A549 (cell line): ENCODE measurements at regions of chr11 and their contacts with region 1.

Region 1: DNA sequence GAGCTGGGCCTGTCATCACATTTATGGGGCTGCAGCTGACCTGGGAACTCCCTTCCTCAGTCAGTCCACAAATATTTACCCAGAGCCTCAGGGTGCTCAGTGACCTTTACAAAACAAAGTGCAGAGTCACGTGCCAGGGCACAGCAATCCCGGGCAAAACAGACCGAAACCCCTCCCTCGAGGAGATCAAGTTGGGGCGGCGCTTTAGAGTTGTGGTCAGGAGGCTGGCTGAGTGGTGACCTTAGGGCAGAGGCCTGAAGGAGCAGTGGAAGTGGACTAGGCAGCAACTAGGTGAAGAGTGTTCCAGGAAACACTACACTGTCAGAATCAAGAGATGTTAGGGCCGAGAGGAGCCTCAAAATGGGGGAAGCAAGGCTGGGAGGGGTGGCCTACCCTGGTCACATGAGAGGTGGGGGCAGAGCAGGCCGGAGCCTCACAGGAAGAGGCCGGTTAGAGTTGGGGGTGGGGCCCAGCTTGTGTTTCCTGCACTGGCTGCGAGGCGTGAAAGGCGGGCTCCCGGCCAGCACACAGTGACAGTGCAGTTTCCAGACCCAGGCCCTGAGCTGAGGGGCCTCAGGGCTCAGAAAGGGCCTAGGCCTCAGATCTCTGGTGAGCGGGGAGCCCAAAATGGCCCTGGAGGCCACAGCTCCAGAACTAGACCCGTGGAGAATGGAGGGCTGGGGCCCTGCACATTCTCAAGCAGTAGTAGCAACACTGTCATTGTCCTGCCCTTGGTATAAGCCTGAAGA is 3.7 kb upstream of the NEAT1 start:
- DNase-seq: peak; percentile 94 to 98
- ATAC-seq: peak; percentile 12 to 52
- H3K4me3 ChIP-seq: peak overlapping the region; percentile 30
- H3K27ac ChIP-seq: peak overlapping the region; percentile 97 to 100
- H3K4me1 ChIP-seq: peaks cover 52% of the 10 kb centered on the region
- CTCF ChIP-seq: no peak
- EP300 ChIP-seq: peak; percentile 76 to 83; a peak in 4 of 5 replicates
- POLR2A ChIP-seq: no peak; the same call in 1 of the 2 replicates
- RAD21 ChIP-seq: no peak

Region 2: GRCh38 chr11:65132243-65132987 is 286.5 kb before region 1 on chr11:
- CTCF ChIA-PET with region 1: no interaction called
- POLR2A ChIA-PET with region 1: no interaction called
- DNase-seq: no peak
- ATAC-seq: no peak
- H3K4me3 ChIP-seq: no peak overlapping the region; the same call in 2 of the 3 replicates
- H3K27ac ChIP-seq: no peak overlapping the region
- H3K4me1 ChIP-seq: peaks cover 15% of the 10 kb centered on the region
- CTCF ChIP-seq: no peak
- EP300 ChIP-seq: no peak
- POLR2A ChIP-seq: no peak
- RAD21 ChIP-seq: no peak

Region 3: DNA sequence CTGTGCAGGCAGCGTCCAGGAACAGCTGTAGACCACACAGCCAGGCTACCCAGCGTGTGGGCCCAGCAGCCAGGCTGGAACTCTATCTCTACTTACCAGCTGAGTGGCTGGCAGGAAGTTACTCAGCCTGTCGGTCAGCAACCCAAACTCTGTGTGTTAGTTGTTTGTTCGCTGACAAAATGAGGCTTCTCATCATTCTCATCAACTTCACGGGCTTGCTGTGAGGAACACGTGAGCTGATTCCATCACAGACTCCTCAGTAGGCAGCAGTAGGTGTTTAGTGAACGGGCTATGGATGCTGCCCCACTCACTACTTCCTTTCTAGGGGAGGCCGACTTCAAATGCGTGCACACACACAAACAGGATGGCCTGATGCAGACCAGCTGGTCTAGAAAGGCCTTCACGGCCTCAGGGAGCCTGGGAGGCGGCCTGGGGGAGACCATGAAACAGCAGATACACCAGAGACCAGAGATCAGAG is 249.7 kb before region 1 on chr11:
- CTCF ChIA-PET with region 1: no interaction called
- POLR2A ChIA-PET with region 1: no interaction called
- DNase-seq: no peak
- ATAC-seq: peak in 1 of 2 experiments; percentile 18; a peak in 3 of 6 replicates
- H3K4me3 ChIP-seq: no peak overlapping the region
- H3K27ac ChIP-seq: no peak overlapping the region
- H3K4me1 ChIP-seq: 0 out of 3 replicates have a peak, but pooled peaks cover 4% of the 10 kb centered on the region
- CTCF ChIP-seq: no peak
- EP300 ChIP-seq: no peak
- POLR2A ChIP-seq: no peak
- RAD21 ChIP-seq: no peak

Region 4: GRCh38 chr11:65274735-65275682 is 143.9 kb before region 1 on chr11:
- CTCF ChIA-PET with region 1: interaction called, 6 read pairs
- POLR2A ChIA-PET with region 1: interaction called, 10 read pairs
- DNase-seq: peak; percentile 66 to 85
- ATAC-seq: peak; percentile 88 to 89
- H3K4me3 ChIP-seq: no peak overlapping the region
- H3K27ac ChIP-seq: peak overlapping the region; percentile 23 to 69; a peak in 4 of 6 replicates
- H3K4me1 ChIP-seq: peaks cover 48% of the 10 kb centered on the region
- CTCF ChIP-seq: peak; percentile 96
- EP300 ChIP-seq: no peak
- POLR2A ChIP-seq: no peak
- RAD21 ChIP-seq: peak; percentile 99

Region 5: DNA sequence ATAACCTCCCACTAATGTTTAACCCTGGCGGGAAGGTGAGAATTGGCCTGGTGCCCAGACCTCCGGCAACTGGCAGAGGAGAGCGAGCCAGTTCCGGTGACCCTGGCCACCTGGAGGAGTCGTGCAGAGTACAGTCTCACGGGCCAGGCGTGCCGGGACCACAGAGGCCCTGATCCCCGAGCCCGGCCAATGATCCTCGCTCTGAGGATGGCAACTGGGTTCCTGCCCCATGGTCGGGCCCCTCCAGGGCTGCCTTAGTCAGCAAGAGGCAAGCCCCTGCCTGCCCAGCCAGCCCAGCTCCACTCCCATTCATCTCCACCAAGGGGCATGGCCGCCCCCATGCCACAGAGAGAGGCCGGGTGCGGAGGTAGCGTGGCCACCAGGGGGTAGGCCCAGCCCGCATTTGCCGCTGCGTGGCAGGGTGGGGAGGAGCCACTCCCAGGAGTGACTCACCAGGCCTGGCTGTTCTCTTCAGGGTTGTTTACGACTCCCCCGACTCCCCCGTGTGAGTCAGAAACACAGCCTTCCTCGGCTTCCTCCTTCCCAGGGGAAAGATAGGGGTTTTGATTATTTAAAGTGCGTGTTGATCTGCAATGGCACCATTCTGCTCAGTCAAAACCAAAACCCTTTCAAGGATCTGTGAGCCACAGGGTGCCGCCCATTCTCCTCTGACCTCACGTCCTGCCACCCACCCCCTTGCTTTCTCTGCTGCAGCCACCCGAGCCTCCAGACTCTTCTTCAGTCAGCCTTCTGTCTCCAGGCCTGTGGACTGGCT is 36.7 kb before region 1 on chr11 and contains the start of gene SLC25A45:
- CTCF ChIA-PET with region 1: interaction called, 208 read pairs
- POLR2A ChIA-PET with region 1: interaction called, 17 read pairs
- DNase-seq: peak; percentile 78 to 98
- ATAC-seq: peak; percentile 88 to 90
- H3K4me3 ChIP-seq: peak within 1 kb of the TSS; percentile 46
- H3K27ac ChIP-seq: peak within 1 kb of the TSS; percentile 93 to 99
- H3K4me1 ChIP-seq: peaks cover 80% of the 10 kb centered on the region
- CTCF ChIP-seq: peak; percentile 52; the same call in 2 of the 3 replicates
- EP300 ChIP-seq: peak; percentile 19 to 35; a peak in 3 of 5 replicates
- POLR2A ChIP-seq: no peak; the same call in none of the 2 replicates
- RAD21 ChIP-seq: peak; percentile 75 to 81
- polyA plus RNA-seq, gene SLC25A45: 3.1 and 4.9 TPM in 2 replicates

Region 6: GRCh38 chr11:65432686-65433582 is 14.0 kb after region 1 on chr11:
- CTCF ChIA-PET with region 1: interaction called, 11 read pairs
- POLR2A ChIA-PET with region 1: interaction called, 131 read pairs
- DNase-seq: peak in 1 of 2 experiments; percentile 75
- ATAC-seq: no peak
- H3K4me3 ChIP-seq: no peak overlapping the region
- H3K27ac ChIP-seq: peak overlapping the region; percentile 43 to 55; a peak in 4 of 6 replicates
- H3K4me1 ChIP-seq: peaks cover 85% of the 10 kb centered on the region
- CTCF ChIP-seq: peak; percentile 52
- EP300 ChIP-seq: no peak
- POLR2A ChIP-seq: no peak
- RAD21 ChIP-seq: peak; percentile 58 to 59

Region 7: DNA sequence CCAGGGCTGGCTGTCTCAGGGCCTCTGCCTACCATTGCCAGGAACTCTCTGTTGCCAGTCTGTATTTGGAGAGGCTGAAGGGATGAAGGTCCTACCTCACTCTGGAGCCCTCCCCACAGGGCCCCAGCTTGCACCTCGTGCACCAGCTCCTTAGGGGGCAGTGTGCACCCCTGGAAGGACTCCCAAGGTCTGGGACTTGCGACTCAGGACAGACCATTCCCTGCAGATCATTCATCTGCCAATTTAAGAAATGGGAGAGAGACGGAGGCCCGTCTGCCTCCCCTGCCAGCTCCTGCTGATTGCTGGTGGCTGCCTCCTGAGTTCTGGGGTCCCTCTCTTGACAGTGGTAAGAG is 52.5 kb after region 1 on chr11:
- CTCF ChIA-PET with region 1: interaction called, 9 read pairs
- POLR2A ChIA-PET with region 1: interaction called, 44 read pairs
- DNase-seq: peak; percentile 84 to 91
- ATAC-seq: peak; percentile 82 to 88
- H3K4me3 ChIP-seq: peak overlapping the region; percentile 24; the same call in 2 of the 3 replicates
- H3K27ac ChIP-seq: peak overlapping the region; percentile 93 to 96
- H3K4me1 ChIP-seq: peaks cover 68% of the 10 kb centered on the region
- CTCF ChIP-seq: peak; percentile 61
- EP300 ChIP-seq: no peak
- POLR2A ChIP-seq: no peak
- RAD21 ChIP-seq: peak; percentile 68 to 83

Region 8: DNA sequence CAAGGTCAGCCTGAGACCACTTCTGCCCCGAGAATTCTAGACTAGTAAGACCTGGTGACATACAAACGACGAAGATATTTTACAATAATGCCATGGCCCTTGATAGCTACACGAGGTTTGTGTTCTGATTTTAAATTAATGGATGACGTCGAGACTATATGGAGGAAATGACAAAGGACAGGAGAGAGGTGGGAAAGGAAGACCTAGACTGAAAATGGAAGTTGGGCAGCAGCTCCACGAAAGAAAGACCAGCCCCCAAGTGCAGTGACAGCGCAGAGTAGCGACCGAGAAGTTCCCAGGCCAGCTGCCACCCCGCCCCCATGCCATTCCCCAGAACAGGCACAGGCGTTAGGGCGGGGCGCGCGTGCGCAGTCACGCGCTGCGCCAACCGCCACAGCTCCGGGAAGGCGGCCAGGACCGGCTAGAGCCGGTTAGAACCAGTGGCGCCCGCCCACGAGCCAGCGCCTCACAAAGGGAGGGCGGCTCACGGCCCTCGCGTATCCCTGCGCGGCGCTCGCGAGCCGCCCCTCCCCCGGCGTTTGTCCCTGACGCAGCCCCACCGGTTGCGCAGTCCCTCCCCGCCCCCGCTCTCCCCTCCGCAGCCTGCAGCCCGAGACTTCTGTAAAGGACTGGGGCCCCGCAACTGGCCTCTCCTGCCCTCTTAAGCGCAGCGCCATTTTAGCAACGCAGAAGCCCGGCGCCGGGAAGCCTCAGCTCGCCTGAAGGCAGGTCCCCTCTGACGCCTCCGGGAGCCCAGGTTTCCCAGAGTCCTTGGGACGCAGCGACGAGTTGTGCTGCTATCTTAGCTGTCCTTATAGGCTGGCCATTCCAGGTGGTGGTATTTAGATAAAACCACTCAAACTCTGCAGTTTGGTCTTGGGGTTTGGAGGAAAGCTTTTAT is 78.5 kb after region 1 on chr11:
- CTCF ChIA-PET with region 1: interaction called, 27 read pairs
- POLR2A ChIA-PET with region 1: interaction called, 756 read pairs
- DNase-seq: peak; percentile 74 to 99
- ATAC-seq: peak; percentile 72 to 79
- H3K4me3 ChIP-seq: peak overlapping the region; percentile 90
- H3K27ac ChIP-seq: peak overlapping the region; percentile 98 to 100
- H3K4me1 ChIP-seq: peaks cover 53% of the 10 kb centered on the region
- CTCF ChIP-seq: no peak
- EP300 ChIP-seq: peak; percentile 44 to 85; a peak in 3 of 5 replicates
- POLR2A ChIP-seq: 0 out of 2 replicates have a peak, but pooled peaks have one; percentile 13
- RAD21 ChIP-seq: peak; percentile 18 to 67; a peak in 4 of 5 replicates